ENCODE measurements at regions of chr4 and their contacts with region 1.

Region 1: DNA sequence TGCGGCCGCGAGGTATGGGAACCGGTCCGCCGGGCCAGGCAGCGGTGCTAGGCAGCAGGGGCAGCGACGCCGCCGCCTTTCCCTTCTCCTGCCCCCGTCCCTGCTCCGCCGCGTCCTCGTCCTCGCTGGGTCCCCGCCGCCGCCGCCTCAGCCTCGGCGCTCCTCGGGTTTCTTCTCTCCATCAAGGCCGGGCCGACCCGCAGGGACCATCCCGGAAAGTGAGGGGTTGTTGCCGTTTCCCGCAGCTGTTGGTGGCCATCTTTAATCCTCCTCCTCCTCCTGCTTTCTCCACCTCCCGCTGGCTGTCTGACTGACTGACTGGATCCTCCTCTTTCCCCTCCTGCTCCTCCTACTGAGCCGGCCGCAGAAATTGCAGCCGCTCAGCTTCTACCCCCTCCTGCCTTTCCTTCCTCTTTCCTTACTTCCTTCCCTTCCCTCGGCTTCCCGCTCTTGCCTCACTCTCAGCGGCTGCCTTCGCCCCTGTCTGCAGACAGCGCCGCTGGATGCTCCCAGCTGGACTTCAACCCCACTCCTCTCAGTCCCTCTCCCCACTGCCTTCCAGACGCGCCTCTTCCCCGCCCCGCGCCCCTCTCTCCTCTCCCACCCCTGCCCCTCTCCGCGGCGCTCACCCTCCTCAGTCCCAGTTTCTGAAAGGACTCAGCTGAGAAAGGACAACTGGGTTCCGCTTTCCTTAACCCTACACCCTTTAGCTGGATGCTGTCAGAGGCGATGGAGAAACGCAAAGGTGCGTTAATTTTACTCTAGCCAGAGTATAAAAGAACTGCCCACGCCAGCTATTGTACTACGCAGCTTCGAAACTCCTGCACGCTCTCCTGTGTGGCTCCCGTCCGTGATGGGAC is at the start of gene WDFY3:
- ATAC-seq: peak; percentile 69 to 89 (median 76)
- H3K4me3 ChIP-seq: peak within 1 kb of the TSS; percentile 76 to 96 (median 86)
- H3K27ac ChIP-seq: peak within 1 kb of the TSS; percentile 96
- H3K4me1 ChIP-seq: peaks cover 8 to 37% of the 10 kb centered on the region in 2 donors
- total RNA-seq, gene WDFY3: 41.2 to 155 (median 52.1) TPM

Region 2: GRCh38 chr4:84726356-84726755 is 240.3 kb before region 1 on chr4:
- in situ Hi-C with region 1: loop called in 1 of 9 experiments (anchors 25 kb)
- ATAC-seq: no peak
- H3K4me3 ChIP-seq: no peak overlapping the region
- H3K27ac ChIP-seq: no peak overlapping the region
- H3K4me1 ChIP-seq: no peaks in the 10 kb centered on the region

Region 3: GRCh38 chr4:84750253-84750959 is 216.2 kb before region 1 on chr4:
- in situ Hi-C with region 1: loop called in 4 of 9 experiments (anchors 10 to 25 kb)
- ATAC-seq: peak in 6 of 8 experiments; percentile 50 to 80 (median 70)
- H3K4me3 ChIP-seq: no peak overlapping the region
- H3K27ac ChIP-seq: no peak overlapping the region
- H3K4me1 ChIP-seq: no peaks in the 10 kb centered on the region

Region 4: GRCh38 chr4:84826681-84827080 is 139.9 kb before region 1 on chr4:
- in situ Hi-C with region 1: loop called in 1 of 9 experiments (anchors 25 kb)
- ATAC-seq: no peak
- H3K4me3 ChIP-seq: no peak overlapping the region
- H3K27ac ChIP-seq: no peak overlapping the region
- H3K4me1 ChIP-seq: no peaks in the 10 kb centered on the region

Measured in motor neuron (in vitro differentiated cells).